ENCODE measurements at regions of chr4 and their contacts with region 1.

Region 1: GRCh38 chr4:140861359-140862176 is 105.4 kb upstream of the TBC1D9 start:
- DNase-seq: no peak
- ATAC-seq: peak; percentile 71

Region 2: GRCh38 chr4:140523857-140524742 is 337.5 kb before region 1 on chr4 and contains the start of gene ELMOD2:
- intact Hi-C with region 1: loop called (anchors 5 kb)
- DNase-seq: peak; percentile 100
- ATAC-seq: peak; percentile 100
- total RNA-seq, gene ELMOD2: 14.6 TPM

Region 3: GRCh38 chr4:140884431-140885058 is 23.0 kb after region 1 on chr4:
- intact Hi-C with region 1: loop called (anchors 2 kb)
- DNase-seq: no peak
- ATAC-seq: peak; percentile 63

Region 4: GRCh38 chr4:140955641-140956040 is 94.1 kb after region 1 on chr4:
- intact Hi-C with region 1: no loop called
- DNase-seq: no peak
- ATAC-seq: no peak

Region 5: DNA sequence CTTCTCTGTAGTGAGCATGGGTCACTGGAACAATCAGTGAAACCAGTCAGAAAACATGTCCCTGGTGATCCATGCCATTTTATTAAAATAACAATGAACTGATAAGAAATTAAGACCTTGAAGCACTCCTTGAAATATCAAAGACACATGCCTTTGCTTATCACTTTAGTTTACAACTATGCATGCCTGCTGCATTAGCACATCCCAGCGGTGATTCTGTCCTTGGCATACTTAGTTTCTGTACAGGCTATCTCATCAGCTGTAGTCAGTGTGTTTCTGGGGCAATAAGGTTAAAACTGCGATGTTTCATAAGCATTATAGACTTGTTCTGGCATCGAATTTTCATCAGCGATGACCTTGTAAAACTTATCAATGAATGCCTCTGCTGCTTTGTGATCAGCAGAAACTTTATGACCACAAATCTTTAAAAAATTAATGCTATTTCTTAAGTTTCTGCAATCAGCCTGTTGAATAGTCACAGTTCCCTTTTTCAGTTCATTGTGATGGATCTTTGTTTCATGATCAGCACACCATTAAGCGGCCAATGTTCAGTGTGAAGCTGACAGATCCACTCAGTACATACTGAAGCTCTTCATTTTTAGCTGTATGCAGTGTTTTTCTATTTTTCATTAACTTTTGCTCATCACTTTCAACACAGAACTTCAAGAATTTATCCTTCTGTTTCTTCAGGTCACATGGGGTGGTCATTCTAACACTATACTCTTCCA is 121.2 kb after region 1 on chr4:
- intact Hi-C with region 1: loop called (anchors 5 kb)
- DNase-seq: no peak
- ATAC-seq: peak; percentile 67

Region 6: DNA sequence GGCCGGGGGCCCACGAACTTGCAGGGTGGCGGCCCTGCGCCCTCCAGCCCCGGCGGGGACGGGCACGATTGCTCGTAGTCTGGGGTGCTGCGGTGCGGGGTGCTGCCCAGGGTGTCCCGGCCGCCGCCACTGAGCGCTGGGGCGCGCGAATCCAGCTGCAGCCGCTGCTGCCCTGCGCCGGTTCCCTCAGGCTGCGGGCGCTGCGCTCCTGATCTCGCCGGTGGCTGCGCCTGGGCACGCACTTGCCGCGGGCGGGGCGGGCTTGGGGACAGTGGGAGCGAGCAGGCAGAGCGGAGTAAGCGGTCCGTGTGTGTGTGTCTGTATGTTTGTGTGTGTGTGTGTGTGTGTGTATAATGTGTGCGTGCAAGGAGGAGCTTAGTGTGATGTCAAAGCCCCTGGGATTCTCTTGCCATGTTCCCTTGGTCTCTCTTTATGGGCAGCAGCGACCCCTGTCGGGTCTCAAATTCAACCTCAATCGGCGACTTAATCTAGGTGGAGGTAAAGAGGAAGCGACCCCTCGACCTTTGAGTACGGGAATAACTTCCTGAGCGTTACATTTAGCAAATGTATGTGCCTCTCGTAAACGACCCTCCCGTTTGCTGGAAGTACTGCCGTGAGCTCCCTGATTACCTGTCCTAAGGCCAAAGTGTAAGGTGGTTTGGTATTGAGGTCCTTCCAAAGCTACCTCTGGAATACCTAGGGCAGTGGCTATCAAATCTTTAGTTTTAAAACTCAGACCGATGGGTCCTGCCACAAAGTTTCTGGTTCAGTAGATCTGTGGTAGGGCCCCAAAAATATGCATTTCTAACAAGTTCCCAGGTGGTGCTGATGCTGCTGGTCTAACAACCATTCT is 271.8 kb after region 1 on chr4 and contains the start of gene RNF150:
- intact Hi-C with region 1: loop called (anchors 1 kb)
- DNase-seq: peak; percentile 86
- ATAC-seq: peak; percentile 85
- total RNA-seq, gene RNF150: 56.1 TPM

Region 7: GRCh38 chr4:141220655-141221605 is 359.4 kb after region 1 on chr4 and contains the start of gene ZNF330:
- intact Hi-C with region 1: loop called (anchors 5 kb)
- DNase-seq: peak; percentile 95
- ATAC-seq: peak; percentile 97
- total RNA-seq, gene ZNF330: 156 TPM